PC-3 (cell line): ENCODE measurements at regions of chr17 and their contacts with region 1.

Region 1: DNA sequence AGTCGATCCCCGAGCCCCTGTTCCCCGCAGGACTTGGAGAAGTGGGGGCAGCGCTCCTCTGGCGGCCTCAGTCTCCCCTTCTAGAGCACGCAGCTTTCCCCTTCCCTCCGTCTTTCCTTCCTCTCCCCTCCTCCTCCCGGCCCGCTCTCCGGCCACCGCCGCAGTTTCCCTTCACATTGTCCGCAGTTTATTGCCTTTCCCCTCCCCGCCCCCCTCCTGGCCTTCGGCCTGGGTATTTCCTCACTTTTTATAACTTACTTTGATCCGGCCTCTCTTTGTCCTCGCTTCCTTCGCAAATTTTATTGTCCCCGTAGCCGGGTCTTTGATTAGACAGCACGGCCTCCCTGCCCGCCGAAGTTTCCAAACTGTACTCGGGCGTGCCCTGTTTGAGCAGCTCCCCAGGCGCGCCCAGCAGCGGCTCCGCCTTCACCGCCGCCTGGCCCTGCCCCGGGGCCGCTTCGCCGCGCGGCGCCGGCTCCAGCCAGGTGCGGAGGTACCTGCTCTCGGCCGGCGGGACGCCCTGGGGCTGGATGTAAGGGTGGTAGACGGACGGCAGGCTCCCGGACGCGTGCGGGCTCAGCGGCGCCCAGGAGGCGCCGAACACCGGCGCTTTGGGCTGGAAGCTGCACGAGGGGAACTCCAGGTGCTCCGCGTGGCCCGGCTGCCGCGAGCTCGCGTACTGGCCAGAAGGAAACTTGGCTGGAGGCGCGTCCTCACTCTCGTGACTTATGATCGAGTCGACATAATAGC is 488 bp downstream of the HOXB9 start:
- DNase-seq: peak; percentile 77
- ATAC-seq: peak; percentile 84
- H3K4me3 ChIP-seq: peak overlapping the region; percentile 70
- H3K27ac ChIP-seq: no peak overlapping the region
- H3K4me1 ChIP-seq: peaks cover 12% of the 10 kb centered on the region
- H3K27me3 ChIP-seq: peaks cover 59% of the 10 kb centered on the region
- CTCF ChIP-seq: no peak

Region 2: DNA sequence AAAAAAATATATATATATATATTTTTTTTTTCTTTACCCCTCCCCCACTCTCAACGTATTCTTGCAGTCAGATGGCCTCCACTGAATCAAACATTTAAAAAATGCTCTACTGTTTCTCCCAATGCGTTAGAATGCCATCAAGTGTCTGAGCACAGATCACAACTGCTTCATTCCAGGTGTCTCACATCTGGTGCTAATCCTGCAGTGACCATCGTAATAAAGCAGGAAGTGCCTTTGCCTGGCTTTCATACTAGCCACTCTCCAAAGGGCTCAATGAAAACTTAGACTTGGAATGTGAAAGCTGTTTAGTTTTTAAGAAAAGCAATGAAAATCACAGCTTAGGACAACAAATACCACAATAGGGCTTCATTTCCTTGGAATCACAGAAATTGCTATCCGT is 232.8 kb before region 1 on chr17:
- CTCF ChIA-PET with region 1: no interaction called
- POLR2A ChIA-PET with region 1: no interaction called
- intact Hi-C with region 1: no loop called
- DNase-seq: no peak
- ATAC-seq: no peak
- H3K4me3 ChIP-seq: no peak overlapping the region
- H3K27ac ChIP-seq: no peak overlapping the region
- H3K4me1 ChIP-seq: no peaks in the 10 kb centered on the region
- H3K27me3 ChIP-seq: 0 out of 2 replicates have a peak, but pooled peaks cover 3% of the 10 kb centered on the region
- CTCF ChIP-seq: no peak

Region 3: GRCh38 chr17:48578616-48579470 is 46.8 kb before region 1 on chr17:
- CTCF ChIA-PET with region 1: no interaction called
- POLR2A ChIA-PET with region 1: no interaction called
- intact Hi-C with region 1: no loop called
- DNase-seq: no peak
- ATAC-seq: no peak
- H3K4me3 ChIP-seq: no peak overlapping the region
- H3K27ac ChIP-seq: no peak overlapping the region
- H3K4me1 ChIP-seq: peaks cover 20% of the 10 kb centered on the region
- H3K27me3 ChIP-seq: no peaks in the 10 kb centered on the region
- CTCF ChIP-seq: no peak

Region 4: GRCh38 chr17:48603959-48604769 is 21.5 kb before region 1 on chr17:
- CTCF ChIA-PET with region 1: no interaction called
- POLR2A ChIA-PET with region 1: no interaction called
- intact Hi-C with region 1: no loop called
- DNase-seq: peak; percentile 79
- ATAC-seq: peak; percentile 61
- H3K4me3 ChIP-seq: peak overlapping the region; percentile 82
- H3K27ac ChIP-seq: peak overlapping the region; percentile 60
- H3K4me1 ChIP-seq: peaks cover 23% of the 10 kb centered on the region
- H3K27me3 ChIP-seq: no peaks in the 10 kb centered on the region
- CTCF ChIP-seq: no peak

Region 5: GRCh38 chr17:48671697-48672171 is 46.1 kb after region 1 on chr17:
- CTCF ChIA-PET with region 1: no interaction called
- POLR2A ChIA-PET with region 1: interaction called, 26 read pairs
- intact Hi-C with region 1: no loop called
- DNase-seq: peak; percentile 95
- ATAC-seq: peak; percentile 72
- H3K4me3 ChIP-seq: peak overlapping the region; percentile 64
- H3K27ac ChIP-seq: no peak overlapping the region
- H3K4me1 ChIP-seq: peaks cover 5% of the 10 kb centered on the region; the same call in 1 of the 2 replicates
- H3K27me3 ChIP-seq: no peaks in the 10 kb centered on the region
- CTCF ChIP-seq: peak; percentile 96